ENCODE measurements at regions of chr13 and their contacts with region 1.

Region 1: DNA sequence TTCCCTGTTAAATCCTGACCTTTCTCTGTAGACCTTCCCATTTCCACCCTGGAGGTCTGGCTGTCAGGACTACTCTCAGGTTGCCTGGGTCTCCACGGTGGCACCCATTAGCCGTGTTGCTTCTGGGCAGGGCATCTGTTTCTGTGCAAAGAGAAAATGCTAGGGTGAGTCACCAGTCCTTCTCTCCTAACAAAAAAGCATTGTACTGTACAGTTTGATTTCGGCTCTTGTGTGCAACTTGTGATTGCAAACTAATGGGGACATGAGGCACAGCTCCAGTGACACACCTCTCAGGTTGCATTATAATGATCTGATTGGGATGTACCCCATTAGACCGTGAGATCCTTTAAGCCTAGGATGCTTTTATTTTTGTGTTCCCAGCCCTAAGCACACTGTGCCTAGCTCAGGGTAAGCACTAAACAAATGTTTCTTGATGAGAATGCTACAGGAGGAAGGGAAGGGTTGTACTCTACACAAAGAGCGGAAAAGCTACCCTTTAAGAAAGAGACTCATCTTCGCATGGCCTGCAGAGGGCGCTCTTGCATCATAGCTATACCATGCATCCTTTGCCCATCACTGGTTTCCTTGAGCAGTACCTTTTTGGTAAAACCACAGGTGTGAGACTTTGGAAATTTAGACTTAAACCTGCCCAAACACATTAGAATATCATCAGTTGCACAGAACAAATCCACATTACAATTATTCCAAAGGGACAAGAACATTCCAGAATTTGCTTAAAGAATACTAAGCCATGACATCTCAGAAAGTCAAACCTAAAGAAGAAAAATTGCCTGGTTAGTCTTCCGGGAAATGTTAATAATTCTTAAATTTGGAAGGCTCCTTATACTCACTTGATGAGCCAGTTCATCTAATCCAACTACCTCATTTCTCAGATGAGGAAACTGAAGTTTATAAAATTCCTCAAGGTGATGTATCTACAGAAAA is 20.3 kb upstream of the TRIM13 start:
- DNase-seq: peak; percentile 55
- ATAC-seq: peak; percentile 95
- H3K4me3 ChIP-seq: no peak overlapping the region
- H3K27ac ChIP-seq: no peak overlapping the region
- H3K4me1 ChIP-seq: no peaks in the 10 kb centered on the region
- H3K27me3 ChIP-seq: no peaks in the 10 kb centered on the region
- CTCF ChIP-seq: peak; percentile 86 to 95 (median 88)
- EP300 ChIP-seq: no peak
- POLR2A ChIP-seq: no peak
- RAD21 ChIP-seq: peak; percentile 99

Region 2: DNA sequence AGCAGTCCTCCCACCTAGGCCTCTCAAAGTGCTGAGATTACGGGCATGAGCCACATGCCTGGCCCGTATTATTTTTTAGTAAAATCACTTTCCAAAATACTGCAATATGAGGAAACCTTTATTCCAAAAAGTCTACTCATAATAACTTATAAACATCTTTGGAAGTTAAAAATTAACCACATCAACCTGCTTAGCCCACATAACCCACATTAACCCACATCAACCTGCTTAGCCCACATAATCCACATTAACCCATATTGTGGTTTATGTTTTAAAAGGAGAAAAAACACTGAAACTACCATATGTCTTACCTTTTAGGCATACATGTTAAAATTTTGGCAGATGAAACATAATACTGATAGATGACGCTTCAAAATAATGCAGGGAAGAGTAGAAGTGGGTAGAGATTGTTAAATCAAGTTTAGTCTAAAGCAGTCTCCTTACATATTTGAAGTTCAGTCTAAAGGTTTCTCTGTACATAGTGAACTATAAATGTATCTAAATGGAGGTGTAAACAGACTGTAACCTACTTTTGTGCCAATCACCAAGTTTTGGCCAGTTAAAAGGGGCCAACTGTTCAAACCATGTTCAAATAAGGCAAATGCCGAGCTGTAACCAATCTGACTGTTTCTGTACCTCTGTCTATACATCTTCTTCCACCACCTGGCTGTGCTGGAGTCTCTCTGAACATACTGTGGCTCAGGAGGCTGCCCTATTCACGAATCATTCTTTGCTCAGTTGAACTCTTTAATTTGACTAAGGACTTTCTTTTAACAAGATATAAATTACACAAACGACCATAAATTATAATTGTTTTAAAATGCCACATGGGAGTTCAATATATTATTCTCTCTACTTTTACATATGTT is 198.6 kb before region 1 on chr13:
- CTCF ChIA-PET with region 1: no interaction called
- POLR2A ChIA-PET with region 1: no interaction called
- RAD21 ChIA-PET with region 1: no interaction called
- SMC1A ChIA-PET with region 1: no interaction called
- in situ Hi-C with region 1: no loop called
- intact Hi-C with region 1: no loop called
- DNase-seq: no peak
- ATAC-seq: peak; percentile 60
- H3K4me3 ChIP-seq: no peak overlapping the region
- H3K27ac ChIP-seq: no peak overlapping the region
- H3K4me1 ChIP-seq: no peaks in the 10 kb centered on the region
- H3K27me3 ChIP-seq: no peaks in the 10 kb centered on the region
- CTCF ChIP-seq: no peak
- EP300 ChIP-seq: no peak
- POLR2A ChIP-seq: no peak
- RAD21 ChIP-seq: no peak

Region 3: GRCh38 chr13:50387051-50387581 is 410.5 kb after region 1 on chr13:
- CTCF ChIA-PET with region 1: interaction called, 15 read pairs
- POLR2A ChIA-PET with region 1: no interaction called
- RAD21 ChIA-PET with region 1: interaction called, 4 read pairs
- SMC1A ChIA-PET with region 1: no interaction called
- in situ Hi-C with region 1: no loop called
- intact Hi-C with region 1: no loop called
- DNase-seq: no peak
- ATAC-seq: peak; percentile 44; the same call in 2 of the 3 replicates
- H3K4me3 ChIP-seq: no peak overlapping the region
- H3K27ac ChIP-seq: no peak overlapping the region
- H3K4me1 ChIP-seq: no peaks in the 10 kb centered on the region
- H3K27me3 ChIP-seq: no peaks in the 10 kb centered on the region; a peak in 2 of 4 replicates
- CTCF ChIP-seq: peak; percentile 15 to 26 (median 16); a peak in 4 of 6 replicates
- EP300 ChIP-seq: no peak
- POLR2A ChIP-seq: no peak
- RAD21 ChIP-seq: peak; percentile 63

Region 4: DNA sequence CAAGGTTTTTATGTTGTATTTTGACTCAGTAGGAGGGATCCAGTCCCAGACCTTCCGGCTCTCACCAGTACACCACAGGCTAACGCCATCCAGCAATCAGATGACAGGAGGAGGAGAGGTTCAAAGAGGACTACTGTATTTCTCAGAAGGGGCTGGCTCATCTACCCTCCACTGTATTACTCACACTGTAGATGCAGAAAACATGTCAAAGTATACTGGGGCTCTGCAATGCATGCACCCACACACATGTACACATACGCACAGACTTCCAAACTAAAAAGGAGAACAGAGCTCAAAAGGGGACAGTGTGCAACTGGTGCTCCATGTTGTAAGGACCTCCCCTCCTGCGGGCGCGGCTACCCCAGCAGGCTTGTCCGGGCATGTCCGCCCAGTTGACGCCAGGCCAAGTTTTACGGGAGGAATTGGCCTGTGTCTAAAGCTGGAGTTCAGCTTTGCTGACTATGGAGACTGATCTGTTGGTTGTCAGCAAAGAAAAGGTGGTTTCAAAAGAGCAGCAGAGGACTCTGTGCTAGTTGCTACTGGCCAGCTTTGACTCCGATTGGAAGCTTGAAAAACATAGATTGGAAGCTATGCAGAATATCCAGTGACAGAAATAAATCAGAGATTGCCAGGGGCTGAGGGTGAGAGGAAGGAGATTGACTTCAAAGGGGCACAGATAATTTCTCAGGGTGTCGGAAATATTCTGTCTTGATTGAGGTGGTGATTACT is 552.7 kb after region 1 on chr13:
- CTCF ChIA-PET with region 1: interaction called, 22 read pairs
- POLR2A ChIA-PET with region 1: no interaction called
- RAD21 ChIA-PET with region 1: interaction called, 4 read pairs
- SMC1A ChIA-PET with region 1: interaction called, 5 read pairs
- in situ Hi-C with region 1: loop called (anchors 5 kb)
- intact Hi-C with region 1: loop called (anchors 1 kb)
- DNase-seq: no peak
- ATAC-seq: no peak
- H3K4me3 ChIP-seq: no peak overlapping the region
- H3K27ac ChIP-seq: no peak overlapping the region
- H3K4me1 ChIP-seq: no peaks in the 10 kb centered on the region
- H3K27me3 ChIP-seq: peaks cover 2 to 5% of the 10 kb centered on the region in 2 experiments; a peak in 3 of 4 replicates
- CTCF ChIP-seq: no peak
- EP300 ChIP-seq: no peak
- POLR2A ChIP-seq: no peak
- RAD21 ChIP-seq: no peak

Region 5: GRCh38 chr13:50685491-50685890 is 708.9 kb after region 1 on chr13:
- CTCF ChIA-PET with region 1: no interaction called
- POLR2A ChIA-PET with region 1: no interaction called
- RAD21 ChIA-PET with region 1: no interaction called
- SMC1A ChIA-PET with region 1: no interaction called
- in situ Hi-C with region 1: no loop called
- intact Hi-C with region 1: no loop called
- DNase-seq: no peak
- ATAC-seq: peak; percentile 58
- H3K4me3 ChIP-seq: no peak overlapping the region
- H3K27ac ChIP-seq: no peak overlapping the region
- H3K4me1 ChIP-seq: peaks cover 6% of the 10 kb centered on the region
- H3K27me3 ChIP-seq: no peaks in the 10 kb centered on the region
- CTCF ChIP-seq: no peak
- EP300 ChIP-seq: no peak
- POLR2A ChIP-seq: no peak
- RAD21 ChIP-seq: no peak

Region 6: DNA sequence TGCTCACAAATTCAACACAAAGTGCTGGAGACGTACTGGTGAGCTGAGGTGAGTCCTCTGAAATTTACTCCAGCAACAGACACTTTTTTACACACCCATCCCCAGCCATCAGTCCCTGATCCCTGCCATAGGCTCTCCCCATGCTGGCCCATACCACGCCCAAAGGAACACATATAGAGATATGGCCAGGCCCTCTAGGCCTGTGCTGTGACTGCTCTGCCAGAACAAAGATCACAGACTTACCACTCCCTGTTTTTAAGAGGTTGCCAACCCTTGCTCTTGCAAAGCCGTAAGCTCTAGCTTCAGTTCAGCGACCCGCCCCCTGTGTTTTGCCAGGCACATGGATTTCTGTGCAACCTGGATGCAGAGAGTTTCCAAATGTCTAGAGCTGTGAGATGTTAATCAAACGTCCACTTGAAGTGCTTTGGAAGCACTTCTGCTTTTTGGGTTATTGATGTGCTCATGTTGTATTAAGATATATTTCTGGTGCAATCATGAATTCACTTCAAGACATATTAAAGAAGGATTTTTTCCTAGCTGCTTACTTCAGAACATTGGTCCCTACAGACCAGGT is 807.2 kb after region 1 on chr13:
- CTCF ChIA-PET with region 1: interaction called, 11 read pairs
- POLR2A ChIA-PET with region 1: no interaction called
- RAD21 ChIA-PET with region 1: no interaction called
- SMC1A ChIA-PET with region 1: no interaction called
- in situ Hi-C with region 1: no loop called
- intact Hi-C with region 1: no loop called
- DNase-seq: no peak
- ATAC-seq: no peak
- H3K4me3 ChIP-seq: no peak overlapping the region
- H3K27ac ChIP-seq: no peak overlapping the region
- H3K4me1 ChIP-seq: no peaks in the 10 kb centered on the region
- H3K27me3 ChIP-seq: peaks cover 0 to 2% of the 10 kb centered on the region in 2 experiments; a peak in 1 of 4 replicates
- CTCF ChIP-seq: no peak
- EP300 ChIP-seq: no peak
- POLR2A ChIP-seq: no peak
- RAD21 ChIP-seq: no peak

Measured in GM12878 (cell line).